ENCODE measurements at regions of chr13 and their contacts with region 1.

Region 1: GRCh38 chr13:94435604-94436226 is 43.8 kb downstream of the DCT start:
- DNase-seq: no peak
- H3K4me3 ChIP-seq: no peak overlapping the region
- H3K27ac ChIP-seq: no peak overlapping the region
- H3K4me1 ChIP-seq: peaks cover 0 to 9% (median 0%) of the 10 kb centered on the region in 4 donors
- H3K27me3 ChIP-seq: no peaks in the 10 kb centered on the region
- CTCF ChIP-seq: peak; percentile 43 to 56 (median 52)
- EP300 ChIP-seq: no peak
- POLR2A ChIP-seq: no peak

Region 2: GRCh38 chr13:94612050-94612449 is 176.3 kb after region 1 on chr13:
- in situ Hi-C with region 1: loop called (anchors 5 to 10 kb)
- intact Hi-C with region 1: loop called (anchors 5 kb)
- DNase-seq: no peak
- H3K4me3 ChIP-seq: no peak overlapping the region
- H3K27ac ChIP-seq: no peak overlapping the region
- H3K4me1 ChIP-seq: no peaks in the 10 kb centered on the region
- H3K27me3 ChIP-seq: no peaks in the 10 kb centered on the region
- CTCF ChIP-seq: no peak
- EP300 ChIP-seq: no peak
- POLR2A ChIP-seq: no peak

Region 3: DNA sequence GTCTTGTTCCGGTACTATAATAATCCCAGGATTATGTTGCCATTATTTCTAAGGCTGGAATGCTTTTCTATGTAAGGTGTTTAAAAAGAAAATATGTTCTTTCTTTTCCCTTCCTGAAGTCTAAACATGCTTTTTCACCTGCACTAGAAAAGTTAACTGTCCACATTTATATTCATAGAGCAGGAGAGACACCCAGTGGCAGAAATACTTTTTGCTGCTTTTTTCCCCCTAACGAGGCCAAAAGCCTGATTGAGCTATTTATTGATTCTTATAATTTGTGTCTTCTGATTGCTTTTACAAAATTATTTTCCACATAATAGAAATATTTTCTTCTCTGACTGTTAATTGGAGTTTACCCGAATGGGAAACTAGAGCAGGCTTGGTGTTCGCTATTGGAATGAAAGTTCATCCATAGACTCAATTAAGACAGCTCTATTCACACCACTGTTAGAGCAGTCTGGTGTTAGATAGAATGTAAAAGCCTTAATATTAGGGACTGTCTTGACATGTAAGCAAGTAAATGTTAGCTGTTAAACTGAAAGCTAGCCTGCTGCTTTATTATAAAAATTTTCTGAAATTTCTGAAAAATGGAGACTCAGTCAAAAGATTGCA is 181.8 kb after region 1 on chr13:
- in situ Hi-C with region 1: loop called (anchors 5 to 10 kb)
- intact Hi-C with region 1: loop called (anchors 5 kb)
- DNase-seq: no peak
- H3K4me3 ChIP-seq: no peak overlapping the region
- H3K27ac ChIP-seq: no peak overlapping the region
- H3K4me1 ChIP-seq: no peaks in the 10 kb centered on the region
- H3K27me3 ChIP-seq: no peaks in the 10 kb centered on the region
- CTCF ChIP-seq: peak; percentile 54 to 64 (median 59)
- EP300 ChIP-seq: no peak
- POLR2A ChIP-seq: no peak